PC-9 (cell line): ENCODE measurements at regions of chr17 and their contacts with region 1.

Region 1: DNA sequence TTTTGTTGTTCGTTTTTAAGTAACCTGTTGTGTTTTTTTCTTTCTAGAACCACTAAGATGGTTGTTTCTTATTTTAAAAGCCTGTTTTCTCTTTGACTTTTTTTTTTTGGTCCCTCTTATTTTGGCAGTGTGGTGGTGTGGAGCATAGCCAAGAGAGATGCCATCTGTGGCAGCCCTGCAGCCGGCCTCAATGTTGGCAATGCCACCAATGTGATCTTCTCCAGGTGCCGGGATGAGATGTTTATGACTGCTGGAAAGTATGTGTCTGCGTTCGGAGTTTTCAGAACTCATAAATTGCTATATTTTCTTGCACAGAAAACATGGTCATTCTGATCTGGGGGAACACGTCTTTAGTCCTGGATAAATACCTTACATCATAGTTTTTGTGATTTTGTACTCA is 17.6 kb downstream of the CFAP52 start:
- DNase-seq: no peak
- H3K4me3 ChIP-seq: no peak overlapping the region
- H3K27ac ChIP-seq: no peak overlapping the region
- H3K4me1 ChIP-seq: no peaks in the 10 kb centered on the region
- H3K27me3 ChIP-seq: no peaks in the 10 kb centered on the region
- CTCF ChIP-seq: no peak

Region 2: GRCh38 chr17:9432134-9432885 is 161.8 kb before region 1 on chr17:
- CTCF ChIA-PET with region 1: no interaction called
- POLR2A ChIA-PET with region 1: no interaction called
- intact Hi-C with region 1: no loop called
- DNase-seq: no peak
- H3K4me3 ChIP-seq: no peak overlapping the region
- H3K27ac ChIP-seq: no peak overlapping the region
- H3K4me1 ChIP-seq: 0 out of 2 replicates have a peak, but pooled peaks cover 7% of the 10 kb centered on the region
- H3K27me3 ChIP-seq: no peaks in the 10 kb centered on the region
- CTCF ChIP-seq: no peak

Region 3: GRCh38 chr17:9676742-9677387 is 82.8 kb after region 1 on chr17:
- CTCF ChIA-PET with region 1: interaction called, 11 read pairs
- POLR2A ChIA-PET with region 1: no interaction called
- intact Hi-C with region 1: no loop called
- DNase-seq: peak; percentile 83 to 91
- H3K4me3 ChIP-seq: no peak overlapping the region
- H3K27ac ChIP-seq: peak overlapping the region; percentile 83
- H3K4me1 ChIP-seq: peaks cover 25% of the 10 kb centered on the region
- H3K27me3 ChIP-seq: no peaks in the 10 kb centered on the region
- CTCF ChIP-seq: no peak